Mammary epithelial cell (primary cell): ENCODE measurements at regions of chr6 and their contacts with region 1.

Region 1: GRCh38 chr6:42879372-42880239 is at the start of gene RPL7L1:
- DNase-seq: peak; percentile 89
- H3K4me3 ChIP-seq: peak within 1 kb of the TSS; percentile 87 to 100 (median 93)
- H3K27ac ChIP-seq: peak within 1 kb of the TSS; percentile 83
- H3K4me1 ChIP-seq: peaks cover 6% of the 10 kb centered on the region
- H3K27me3 ChIP-seq: no peaks in the 10 kb centered on the region
- CTCF ChIP-seq: no peak
- total RNA-seq, gene RPL7L1: 102 to 106 TPM

Region 2: DNA sequence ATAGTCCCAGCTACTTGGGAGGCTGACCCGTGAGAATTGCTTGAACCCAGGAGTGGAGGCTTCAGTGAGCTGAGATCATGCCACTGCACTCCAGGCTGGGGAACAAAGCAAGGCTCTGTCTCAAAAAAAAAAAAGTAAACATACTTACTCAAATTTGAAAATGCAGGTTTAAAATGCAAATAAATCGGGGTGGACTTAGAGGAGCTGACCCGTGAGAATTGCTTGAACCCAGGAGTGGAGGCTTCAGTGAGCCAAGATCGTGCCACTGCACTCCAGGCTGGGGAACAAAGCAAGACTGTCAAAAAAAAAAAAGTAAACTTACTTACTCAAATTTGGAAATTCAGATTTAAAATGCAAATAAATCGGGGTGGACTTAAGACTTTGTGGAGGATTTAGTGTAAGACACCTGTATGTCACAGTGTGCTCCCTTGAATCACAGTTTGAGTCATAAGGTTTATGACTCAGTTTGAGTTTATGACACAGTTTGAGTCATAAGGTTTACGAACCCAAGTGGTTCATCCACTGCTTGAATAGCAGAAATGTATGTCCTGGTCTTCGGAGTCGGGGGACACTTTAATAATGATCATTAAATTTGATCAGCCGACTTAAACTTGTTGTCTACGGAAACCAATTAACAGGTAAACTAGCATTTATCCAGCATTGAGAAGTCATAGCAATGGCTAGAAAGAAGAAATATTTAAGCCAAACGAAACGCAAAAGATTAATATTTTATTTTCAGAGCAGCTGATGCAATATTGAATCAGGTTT is 655.2 kb before region 1 on chr6:
- CTCF ChIA-PET with region 1: no interaction called
- dilution Hi-C with region 1: no loop called
- in situ Hi-C with region 1: loop called in 1 of 2 experiments (anchors 25 kb)
- intact Hi-C with region 1: loop called (anchors 10 kb)
- DNase-seq: peak; percentile 94
- H3K4me3 ChIP-seq: peak overlapping the region; percentile 1 to 19 (median 4)
- H3K27ac ChIP-seq: peak overlapping the region; percentile 95
- H3K4me1 ChIP-seq: peaks cover 66% of the 10 kb centered on the region
- H3K27me3 ChIP-seq: no peaks in the 10 kb centered on the region
- CTCF ChIP-seq: no peak

Region 3: DNA sequence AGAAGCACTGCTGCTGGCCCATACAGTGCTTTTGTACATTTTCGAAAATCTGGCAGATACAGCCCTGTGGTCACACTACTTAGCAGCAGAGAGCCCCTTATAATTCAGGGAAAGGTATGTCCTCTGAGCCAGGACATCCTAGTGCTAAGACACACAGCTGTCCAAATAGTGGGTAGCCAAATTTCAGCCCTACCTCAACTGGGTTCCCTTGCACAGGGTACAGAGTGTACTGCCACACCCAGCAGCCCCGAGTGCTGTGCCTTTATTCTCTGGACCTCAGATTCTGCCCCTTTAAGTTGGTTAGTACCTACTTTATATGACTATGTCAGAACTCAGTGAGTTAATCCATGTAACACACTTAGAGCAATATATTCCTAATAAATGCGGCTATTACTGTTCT is 204.8 kb before region 1 on chr6:
- CTCF ChIA-PET with region 1: no interaction called
- dilution Hi-C with region 1: no loop called
- in situ Hi-C with region 1: loop called in 1 of 2 experiments (anchors 10 kb)
- intact Hi-C with region 1: no loop called
- DNase-seq: no peak
- H3K4me3 ChIP-seq: no peak overlapping the region
- H3K27ac ChIP-seq: no peak overlapping the region
- H3K4me1 ChIP-seq: no peaks in the 10 kb centered on the region
- H3K27me3 ChIP-seq: no peaks in the 10 kb centered on the region
- CTCF ChIP-seq: no peak

Region 4: DNA sequence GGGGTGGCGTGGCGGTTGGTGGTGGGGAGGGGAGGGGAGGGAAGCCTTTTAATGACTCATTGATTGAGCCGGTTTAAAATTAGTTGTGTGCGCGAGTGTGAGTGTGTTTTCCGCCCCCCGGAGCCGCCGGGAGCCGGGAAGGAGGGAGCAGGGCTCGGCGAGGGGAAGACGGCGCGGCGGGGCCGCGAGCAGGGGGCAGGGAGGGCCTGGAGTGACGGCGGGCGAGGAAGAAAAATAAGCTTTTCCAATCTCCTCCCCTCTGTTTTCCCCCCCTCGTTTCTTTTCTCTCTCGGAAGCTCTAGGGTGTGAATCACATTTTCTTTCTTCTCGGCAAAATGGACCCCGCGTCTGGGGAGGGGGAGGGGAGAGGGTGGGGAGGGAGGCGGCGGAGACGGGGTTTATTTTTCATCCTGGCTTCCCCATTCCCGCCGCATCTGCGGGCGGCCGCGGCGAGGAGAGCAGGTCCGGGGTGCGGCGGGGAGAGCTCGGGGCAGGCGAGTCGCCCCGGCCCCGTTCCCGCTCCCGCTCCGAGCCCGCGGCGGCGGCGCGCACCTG is 96.9 kb before region 1 on chr6:
- CTCF ChIA-PET with region 1: no interaction called
- dilution Hi-C with region 1: no loop called
- in situ Hi-C with region 1: no loop called
- intact Hi-C with region 1: loop called (anchors 1 kb)
- DNase-seq: peak; percentile 78
- H3K4me3 ChIP-seq: peak overlapping the region; percentile 69 to 96 (median 93)
- H3K27ac ChIP-seq: peak overlapping the region; percentile 95
- H3K4me1 ChIP-seq: peaks cover 6% of the 10 kb centered on the region
- H3K27me3 ChIP-seq: no peaks in the 10 kb centered on the region
- CTCF ChIP-seq: no peak

Region 5: DNA sequence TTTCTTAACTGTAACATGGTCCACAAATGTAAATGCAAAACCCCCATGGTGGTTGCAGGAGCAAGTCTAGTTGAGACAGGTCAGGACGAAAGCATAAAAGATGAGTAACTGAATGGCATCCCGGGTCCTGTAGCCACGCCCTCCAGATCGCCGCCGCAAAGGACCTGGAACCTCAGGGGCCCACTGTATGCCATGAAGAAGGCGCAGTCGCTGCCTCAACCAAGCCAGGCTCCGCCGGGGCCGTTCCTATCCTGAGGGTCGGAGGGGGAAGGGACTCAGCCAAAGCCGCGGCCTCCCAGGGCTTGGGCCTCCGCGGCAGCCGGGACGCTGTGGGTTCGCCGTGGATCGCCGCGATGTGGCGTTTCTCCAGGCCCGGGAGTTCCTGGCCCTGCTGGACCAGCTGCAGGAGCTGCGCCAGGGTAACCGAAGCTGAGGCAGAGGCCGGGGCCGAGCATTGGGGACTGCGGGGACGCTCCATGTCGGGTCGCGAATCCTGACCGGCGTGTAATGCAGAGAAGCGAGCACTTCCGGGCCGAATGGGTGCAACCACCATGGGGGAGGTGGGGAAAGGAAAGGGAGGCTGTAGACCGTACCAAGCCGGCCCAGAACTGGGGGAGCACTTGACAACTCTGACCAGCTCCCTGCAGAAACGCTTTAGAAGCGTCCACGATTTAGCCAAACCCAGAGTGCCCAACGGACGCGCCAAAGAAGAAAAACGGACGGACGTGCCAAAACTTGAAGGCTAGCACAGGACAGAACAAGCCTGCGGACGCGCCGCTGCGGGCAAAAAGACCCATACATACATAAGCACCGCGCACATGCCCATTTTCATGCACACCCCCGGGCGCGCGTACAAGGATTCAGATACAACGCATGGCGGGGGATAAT is 10.9 kb after region 1 on chr6:
- CTCF ChIA-PET with region 1: no interaction called
- dilution Hi-C with region 1: no loop called
- in situ Hi-C with region 1: no loop called
- intact Hi-C with region 1: loop called (anchors 1 kb)
- DNase-seq: peak; percentile 98
- H3K4me3 ChIP-seq: peak overlapping the region; percentile 70 to 84 (median 78)
- H3K27ac ChIP-seq: peak overlapping the region; percentile 91
- H3K4me1 ChIP-seq: peaks cover 7% of the 10 kb centered on the region
- H3K27me3 ChIP-seq: no peaks in the 10 kb centered on the region
- CTCF ChIP-seq: no peak